ENCODE measurements at regions of chr17 and their contacts with region 1.

Region 1: DNA sequence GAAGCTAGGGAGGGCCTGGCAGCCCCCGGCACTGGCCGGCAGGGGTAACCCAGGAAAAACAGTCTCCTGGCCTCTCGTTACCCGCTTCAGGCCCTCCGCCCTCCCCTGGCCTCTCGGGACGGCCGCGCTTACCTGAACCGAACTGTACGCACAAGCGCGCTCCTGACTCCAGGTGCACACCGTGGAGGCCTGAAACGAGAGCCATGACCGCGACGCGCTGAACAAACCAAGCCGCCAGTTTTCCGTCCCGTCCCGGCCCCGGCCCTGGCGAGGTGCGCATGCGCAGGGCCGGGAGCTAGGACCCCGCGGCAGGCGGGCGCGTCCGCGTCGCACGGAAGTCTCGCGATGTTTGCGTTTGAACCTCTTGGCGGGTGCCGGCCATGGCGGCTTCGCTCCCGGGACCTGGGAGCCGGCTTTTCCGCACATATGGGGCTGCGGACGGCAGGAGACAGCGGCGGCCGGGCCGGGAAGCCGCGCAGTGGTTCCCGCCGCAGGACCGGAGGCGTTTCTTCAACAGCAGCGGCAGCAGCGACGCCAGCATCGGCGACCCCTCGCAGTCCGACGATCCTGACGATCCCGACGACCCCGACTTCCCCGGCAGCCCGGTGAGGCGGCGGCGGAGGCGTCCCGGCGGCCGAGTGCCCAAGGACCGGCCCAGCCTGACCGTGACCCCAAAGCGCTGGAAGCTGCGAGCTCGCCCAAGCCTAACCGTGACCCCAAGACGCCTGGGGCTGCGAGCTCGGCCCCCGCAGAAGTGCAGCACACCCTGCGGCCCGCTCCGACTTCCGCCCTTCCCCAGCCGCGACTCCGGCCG is at the start of gene HASPIN:
- DNase-seq: peak; percentile 96
- ATAC-seq: peak; percentile 86
- H3K4me3 Mint-ChIP-seq: peak within 1 kb of the TSS; percentile 83
- H3K27ac Mint-ChIP-seq: peak within 1 kb of the TSS; percentile 93
- H3K4me1 Mint-ChIP-seq: peaks cover 58% of the 10 kb centered on the region
- H3K27me3 Mint-ChIP-seq: no peaks in the 10 kb centered on the region
- total RNA-seq, gene HASPIN: 21.0 to 25.2 TPM

Region 2: GRCh38 chr17:3558603-3559269 is 165.0 kb before region 1 on chr17:
- CTCF ChIA-PET with region 1: no interaction called
- POLR2A ChIA-PET with region 1: no interaction called
- intact Hi-C with region 1: loop called in 1 of 2 experiments (anchors 1 kb)
- DNase-seq: peak; percentile 85
- ATAC-seq: peak; percentile 81
- H3K4me3 Mint-ChIP-seq: no peak overlapping the region
- H3K27ac Mint-ChIP-seq: peak overlapping the region; percentile 69
- H3K4me1 Mint-ChIP-seq: peaks cover 34% of the 10 kb centered on the region
- H3K27me3 Mint-ChIP-seq: no peaks in the 10 kb centered on the region

Region 3: DNA sequence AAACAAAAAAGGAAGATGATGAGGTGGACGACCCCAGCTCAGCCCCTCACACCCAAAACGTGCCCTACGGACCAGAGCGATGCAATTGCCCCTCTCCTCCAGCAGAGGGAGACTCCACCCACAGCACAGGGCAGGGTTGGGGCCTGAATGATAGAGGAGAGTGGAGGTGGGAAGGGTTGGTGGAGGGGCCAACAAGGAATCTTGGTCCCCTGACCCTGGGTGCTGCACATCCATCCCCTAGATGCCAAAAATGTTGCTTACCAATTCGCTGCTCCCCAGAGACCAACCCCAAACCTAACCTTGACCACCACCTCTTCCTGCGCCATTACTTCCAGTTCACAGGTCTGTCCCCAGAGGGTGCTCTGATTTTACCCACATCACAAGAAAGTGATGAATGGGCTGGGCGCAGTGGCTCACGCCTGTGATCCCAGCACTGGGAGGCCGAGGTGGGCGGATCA is 40.7 kb before region 1 on chr17:
- CTCF ChIA-PET with region 1: interaction called, 22 read pairs
- POLR2A ChIA-PET with region 1: no interaction called
- intact Hi-C with region 1: loop called (anchors 2 kb)
- DNase-seq: peak; percentile 76
- ATAC-seq: peak; percentile 96
- H3K4me3 Mint-ChIP-seq: no peak overlapping the region
- H3K27ac Mint-ChIP-seq: peak overlapping the region; percentile 39
- H3K4me1 Mint-ChIP-seq: peaks cover 10% of the 10 kb centered on the region
- H3K27me3 Mint-ChIP-seq: no peaks in the 10 kb centered on the region

Region 4: DNA sequence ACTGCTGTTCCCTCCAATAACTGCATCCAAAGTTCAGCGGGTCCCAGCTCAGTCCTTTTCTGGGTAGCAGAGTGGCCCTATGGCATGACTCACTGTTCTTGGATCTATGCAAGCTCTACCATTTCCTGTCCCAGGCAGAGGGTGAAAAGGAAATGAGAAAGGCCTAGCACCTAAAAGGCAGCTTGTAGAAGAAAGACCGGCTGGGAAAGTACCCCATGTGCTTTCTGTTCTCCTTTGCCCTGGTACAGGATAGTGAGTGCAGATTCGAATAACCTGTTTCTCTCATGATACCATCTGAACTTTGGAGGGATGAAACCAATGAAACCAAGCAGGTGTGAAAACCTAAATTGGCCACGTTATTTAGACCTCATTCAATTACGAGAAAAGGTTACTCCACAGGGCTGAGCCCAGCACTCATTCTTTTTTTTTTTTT is 12.8 kb before region 1 on chr17:
- CTCF ChIA-PET with region 1: interaction called, 8 read pairs
- POLR2A ChIA-PET with region 1: interaction called, 13 read pairs
- intact Hi-C with region 1: loop called (anchors 1 kb)
- DNase-seq: peak; percentile 82
- ATAC-seq: peak; percentile 98
- H3K4me3 Mint-ChIP-seq: peak overlapping the region; percentile 55
- H3K27ac Mint-ChIP-seq: peak overlapping the region; percentile 83
- H3K4me1 Mint-ChIP-seq: peaks cover 55% of the 10 kb centered on the region
- H3K27me3 Mint-ChIP-seq: no peaks in the 10 kb centered on the region

Region 5: GRCh38 chr17:3796110-3796821 is 72.5 kb after region 1 on chr17:
- CTCF ChIA-PET with region 1: no interaction called
- POLR2A ChIA-PET with region 1: no interaction called
- intact Hi-C with region 1: no loop called
- DNase-seq: peak; percentile 80
- ATAC-seq: peak; percentile 75
- H3K4me3 Mint-ChIP-seq: no peak overlapping the region
- H3K27ac Mint-ChIP-seq: peak overlapping the region; percentile 43
- H3K4me1 Mint-ChIP-seq: peaks cover 29% of the 10 kb centered on the region
- H3K27me3 Mint-ChIP-seq: no peaks in the 10 kb centered on the region

Region 6: GRCh38 chr17:3965118-3965803 is 241.5 kb after region 1 on chr17:
- CTCF ChIA-PET with region 1: interaction called, 3 read pairs
- POLR2A ChIA-PET with region 1: no interaction called
- intact Hi-C with region 1: loop called in 1 of 2 experiments (anchors 1 kb)
- DNase-seq: peak; percentile 86
- ATAC-seq: peak; percentile 75
- H3K4me3 Mint-ChIP-seq: peak overlapping the region; percentile 81
- H3K27ac Mint-ChIP-seq: peak overlapping the region; percentile 93
- H3K4me1 Mint-ChIP-seq: peaks cover 40% of the 10 kb centered on the region
- H3K27me3 Mint-ChIP-seq: no peaks in the 10 kb centered on the region

Region 7: DNA sequence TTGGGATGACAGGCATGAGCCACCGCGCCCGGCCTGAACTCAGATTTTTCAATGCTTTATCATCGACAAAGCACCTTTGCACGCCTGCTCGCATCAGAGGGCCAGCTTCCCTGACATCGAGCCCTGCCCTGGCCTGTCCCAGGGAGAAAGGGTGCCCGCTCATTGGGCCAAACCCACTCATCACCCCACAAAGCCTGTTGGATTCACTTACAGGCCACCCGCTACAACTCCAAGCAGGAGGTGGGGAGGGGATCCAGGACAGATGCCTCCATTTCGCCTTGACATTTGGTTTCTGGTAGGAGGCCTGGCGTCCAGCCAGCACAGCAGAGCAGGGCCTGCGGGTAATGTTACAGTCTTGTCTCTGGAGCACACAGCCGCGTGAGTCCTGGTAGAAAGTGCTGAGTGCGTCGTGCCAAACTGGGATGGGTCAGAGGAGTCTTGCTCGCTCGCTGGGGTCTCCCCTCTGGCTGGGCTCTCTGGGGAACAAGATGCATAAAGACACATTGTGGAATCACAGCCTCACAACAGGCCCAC is 880.4 kb after region 1 on chr17:
- CTCF ChIA-PET with region 1: no interaction called
- POLR2A ChIA-PET with region 1: no interaction called
- intact Hi-C with region 1: no loop called
- DNase-seq: no peak
- ATAC-seq: no peak
- H3K4me3 Mint-ChIP-seq: no peak overlapping the region
- H3K27ac Mint-ChIP-seq: no peak overlapping the region
- H3K4me1 Mint-ChIP-seq: no peaks in the 10 kb centered on the region
- H3K27me3 Mint-ChIP-seq: peaks cover 13% of the 10 kb centered on the region

Measured in activated CD4-positive, alpha-beta T cell treated with anti-CD3 and anti-CD28 coated beads for 36 hours (primary cell).